ENCODE measurements at regions of chr17 and their contacts with region 1.

Region 1: GRCh38 chr17:28398280-28398981 is 7.6 kb downstream of the SLC46A1 start:
- DNase-seq: no peak
- ATAC-seq: no peak
- H3K4me3 Mint-ChIP-seq: no peak overlapping the region
- H3K27ac Mint-ChIP-seq: no peak overlapping the region
- H3K4me1 Mint-ChIP-seq: peaks cover 27% of the 10 kb centered on the region
- H3K27me3 Mint-ChIP-seq: peaks cover 18% of the 10 kb centered on the region
- CTCF ChIP-seq: no peak

Region 2: DNA sequence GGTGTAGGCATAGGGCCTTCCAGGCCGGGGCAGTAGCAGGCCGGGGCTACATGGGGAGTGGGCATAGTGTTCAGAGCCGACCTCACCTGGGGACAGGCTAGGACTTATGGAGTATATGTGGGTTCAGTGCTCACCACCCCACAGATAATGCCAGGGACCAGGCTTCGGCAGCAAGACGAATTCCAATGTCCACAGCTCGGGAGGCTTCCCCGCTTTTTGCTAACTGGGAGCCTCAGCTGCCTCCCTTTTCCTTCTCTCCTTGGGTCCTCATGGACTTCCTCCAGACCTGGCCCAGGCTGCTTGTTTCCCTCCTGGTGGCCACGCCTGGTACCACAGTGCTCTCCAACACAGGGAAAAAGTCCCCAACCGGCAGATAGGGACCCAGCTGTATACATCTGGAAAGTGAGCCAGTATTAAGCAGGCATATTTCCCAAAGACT is 27.7 kb after region 1 on chr17:
- CTCF ChIA-PET with region 1: interaction called, 11 read pairs
- POLR2A ChIA-PET with region 1: no interaction called
- DNase-seq: peak; percentile 74
- ATAC-seq: peak; percentile 99
- H3K4me3 Mint-ChIP-seq: no peak overlapping the region
- H3K27ac Mint-ChIP-seq: no peak overlapping the region
- H3K4me1 Mint-ChIP-seq: no peaks in the 10 kb centered on the region
- H3K27me3 Mint-ChIP-seq: no peaks in the 10 kb centered on the region
- CTCF ChIP-seq: peak; percentile 55